Colonic mucosa (tissue), 4 donors: ENCODE measurements at regions of chr1 and their contacts with region 1.

Region 1: GRCh38 chr1:18217398-18218043 is 109.9 kb downstream of the IGSF21 start:
- DNase-seq: peak; percentile 63
- H3K4me3 ChIP-seq: no peak overlapping the region
- H3K27ac ChIP-seq: no peak overlapping the region
- H3K4me1 ChIP-seq: no peaks in the 10 kb centered on the region
- H3K27me3 ChIP-seq: no peaks in the 10 kb centered on the region
- CTCF ChIP-seq: peak; percentile 33

Region 2: DNA sequence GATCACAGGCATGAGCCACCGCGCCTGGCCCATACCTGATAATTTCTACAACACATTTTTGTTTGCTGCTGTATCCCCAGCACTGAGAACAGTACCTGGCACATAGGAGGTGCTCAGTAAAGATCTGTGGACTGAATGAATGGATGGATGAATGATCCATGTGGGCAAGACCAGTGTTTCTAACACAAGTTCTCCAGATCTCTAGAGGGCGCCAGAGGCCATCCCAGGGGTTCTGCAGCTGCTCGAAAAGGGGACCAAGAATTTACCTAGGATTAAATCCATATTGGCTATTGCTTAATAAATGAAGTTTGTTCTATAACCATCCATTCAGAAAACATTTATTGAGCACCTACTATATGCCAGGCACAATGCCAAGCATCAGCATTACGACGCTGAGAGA is 294.7 kb before region 1 on chr1:
- intact Hi-C with region 1: loop called (anchors 5 kb)
- DNase-seq: peak; percentile 58
- H3K4me3 ChIP-seq: no peak overlapping the region
- H3K27ac ChIP-seq: no peak overlapping the region
- H3K4me1 ChIP-seq: no peaks in the 10 kb centered on the region
- H3K27me3 ChIP-seq: no peaks in the 10 kb centered on the region
- CTCF ChIP-seq: peak; percentile 45